CD8-positive, alpha-beta T cell (primary cell): ENCODE measurements at regions of chr11 and their contacts with region 1.

Region 1: GRCh38 chr11:19116971-19117750 is at the start of gene ZDHHC13:
- DNase-seq: peak; percentile 85 to 96 (median 93)
- ATAC-seq: peak; percentile 98
- H3K4me3 ChIP-seq: peak within 1 kb of the TSS; percentile 73 to 84
- H3K4me3 Mint-ChIP-seq: peak within 1 kb of the TSS; percentile 93
- H3K27ac ChIP-seq: peak within 1 kb of the TSS; percentile 48 to 62
- H3K27ac Mint-ChIP-seq: peak within 1 kb of the TSS; percentile 87
- H3K4me1 ChIP-seq: peaks cover 26% of the 10 kb centered on the region
- H3K4me1 Mint-ChIP-seq: peaks cover 50% of the 10 kb centered on the region
- H3K27me3 ChIP-seq: no peaks in the 10 kb centered on the region
- H3K27me3 Mint-ChIP-seq: no peaks in the 10 kb centered on the region
- CTCF ChIP-seq: no peak
- total RNA-seq, gene ZDHHC13: 3.1 to 3.5 TPM

Region 2: GRCh38 chr11:17389211-17389956 is 1727.8 kb before region 1 on chr11:
- CTCF ChIA-PET with region 1: no interaction called
- POLR2A ChIA-PET with region 1: no interaction called
- intact Hi-C with region 1: loop called in 1 of 2 experiments (anchors 5 kb)
- DNase-seq: peak; percentile 60 to 89 (median 83)
- ATAC-seq: peak; percentile 91
- H3K4me3 ChIP-seq: peak overlapping the region; percentile 69 to 75
- H3K4me3 Mint-ChIP-seq: peak overlapping the region; percentile 85
- H3K27ac ChIP-seq: no peak overlapping the region
- H3K27ac Mint-ChIP-seq: no peak overlapping the region
- H3K4me1 ChIP-seq: peaks cover 9% of the 10 kb centered on the region
- H3K4me1 Mint-ChIP-seq: peaks cover 8% of the 10 kb centered on the region
- H3K27me3 ChIP-seq: peaks cover 0 to 2% of the 10 kb centered on the region in 2 experiments
- H3K27me3 Mint-ChIP-seq: no peaks in the 10 kb centered on the region
- CTCF ChIP-seq: peak; percentile 71

Region 3: GRCh38 chr11:18000760-18001159 is 1116.4 kb before region 1 on chr11:
- CTCF ChIA-PET with region 1: no interaction called
- POLR2A ChIA-PET with region 1: no interaction called
- intact Hi-C with region 1: loop called in 1 of 2 experiments (anchors 10 kb)
- DNase-seq: no peak
- ATAC-seq: no peak
- H3K4me3 ChIP-seq: no peak overlapping the region
- H3K4me3 Mint-ChIP-seq: no peak overlapping the region
- H3K27ac ChIP-seq: no peak overlapping the region
- H3K27ac Mint-ChIP-seq: peak overlapping the region; percentile 6
- H3K4me1 ChIP-seq: no peaks in the 10 kb centered on the region
- H3K4me1 Mint-ChIP-seq: peaks cover 6% of the 10 kb centered on the region
- H3K27me3 ChIP-seq: no peaks in the 10 kb centered on the region
- H3K27me3 Mint-ChIP-seq: no peaks in the 10 kb centered on the region
- CTCF ChIP-seq: no peak

Region 4: GRCh38 chr11:19076744-19077589 is 40.2 kb before region 1 on chr11:
- CTCF ChIA-PET with region 1: interaction called, 4 read pairs
- POLR2A ChIA-PET with region 1: no interaction called
- intact Hi-C with region 1: loop called in 1 of 2 experiments (anchors 2 kb)
- DNase-seq: peak; percentile 20 to 68 (median 59)
- ATAC-seq: peak; percentile 61
- H3K4me3 ChIP-seq: no peak overlapping the region
- H3K4me3 Mint-ChIP-seq: no peak overlapping the region
- H3K27ac ChIP-seq: no peak overlapping the region
- H3K27ac Mint-ChIP-seq: no peak overlapping the region
- H3K4me1 ChIP-seq: no peaks in the 10 kb centered on the region
- H3K4me1 Mint-ChIP-seq: peaks cover 3% of the 10 kb centered on the region
- H3K27me3 ChIP-seq: no peaks in the 10 kb centered on the region
- H3K27me3 Mint-ChIP-seq: peaks cover 14% of the 10 kb centered on the region
- CTCF ChIP-seq: peak; percentile 99

Region 5: GRCh38 chr11:19240420-19241259 is 123.5 kb after region 1 on chr11 and contains the start of gene E2F8:
- CTCF ChIA-PET with region 1: no interaction called
- POLR2A ChIA-PET with region 1: no interaction called
- intact Hi-C with region 1: loop called (anchors 5 kb)
- DNase-seq: peak; percentile 57 to 86 (median 74)
- ATAC-seq: peak; percentile 77
- H3K4me3 ChIP-seq: peak within 1 kb of the TSS; percentile 67 to 76
- H3K4me3 Mint-ChIP-seq: peak within 1 kb of the TSS; percentile 85
- H3K27ac ChIP-seq: no peak within 1 kb of the TSS
- H3K27ac Mint-ChIP-seq: no peak within 1 kb of the TSS
- H3K4me1 ChIP-seq: peaks cover 20% of the 10 kb centered on the region
- H3K4me1 Mint-ChIP-seq: peaks cover 18% of the 10 kb centered on the region
- H3K27me3 ChIP-seq: peaks cover 21 to 29% of the 10 kb centered on the region in 2 experiments
- H3K27me3 Mint-ChIP-seq: peaks cover 35% of the 10 kb centered on the region
- CTCF ChIP-seq: no peak
- total RNA-seq, gene E2F8: 0.19 TPM in 1 of 2 experiments, not detected in the other

Region 6: DNA sequence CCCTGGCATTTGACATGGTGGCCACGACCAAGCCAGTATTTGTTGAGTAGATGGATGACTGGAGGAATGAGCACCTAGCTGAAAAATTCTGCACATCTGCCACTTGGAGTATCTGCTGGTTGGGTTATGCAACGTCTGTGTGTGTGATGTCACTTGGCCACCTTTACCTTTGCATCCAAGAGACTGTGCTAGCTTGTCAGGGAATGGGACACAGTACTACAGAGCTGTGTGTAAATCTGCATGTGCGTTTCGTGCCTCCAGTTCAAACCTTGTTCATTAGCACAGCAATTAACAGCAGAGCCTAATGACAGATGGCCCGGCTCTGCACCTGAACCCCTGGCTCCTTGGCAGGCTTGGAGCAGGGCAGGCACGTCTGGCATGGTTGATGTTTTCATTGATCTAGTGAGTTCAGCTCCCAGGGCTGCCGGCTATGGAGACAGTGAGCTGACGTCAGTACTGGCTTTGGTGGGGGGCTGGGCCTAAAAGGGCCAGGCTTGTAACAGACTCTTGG is 407.1 kb after region 1 on chr11:
- CTCF ChIA-PET with region 1: no interaction called
- POLR2A ChIA-PET with region 1: no interaction called
- intact Hi-C with region 1: no loop called
- DNase-seq: no peak
- ATAC-seq: no peak
- H3K4me3 ChIP-seq: no peak overlapping the region
- H3K4me3 Mint-ChIP-seq: no peak overlapping the region
- H3K27ac ChIP-seq: no peak overlapping the region
- H3K27ac Mint-ChIP-seq: no peak overlapping the region
- H3K4me1 ChIP-seq: no peaks in the 10 kb centered on the region
- H3K4me1 Mint-ChIP-seq: no peaks in the 10 kb centered on the region
- H3K27me3 ChIP-seq: no peaks in the 10 kb centered on the region
- H3K27me3 Mint-ChIP-seq: peaks cover 12% of the 10 kb centered on the region
- CTCF ChIP-seq: no peak

Region 7: DNA sequence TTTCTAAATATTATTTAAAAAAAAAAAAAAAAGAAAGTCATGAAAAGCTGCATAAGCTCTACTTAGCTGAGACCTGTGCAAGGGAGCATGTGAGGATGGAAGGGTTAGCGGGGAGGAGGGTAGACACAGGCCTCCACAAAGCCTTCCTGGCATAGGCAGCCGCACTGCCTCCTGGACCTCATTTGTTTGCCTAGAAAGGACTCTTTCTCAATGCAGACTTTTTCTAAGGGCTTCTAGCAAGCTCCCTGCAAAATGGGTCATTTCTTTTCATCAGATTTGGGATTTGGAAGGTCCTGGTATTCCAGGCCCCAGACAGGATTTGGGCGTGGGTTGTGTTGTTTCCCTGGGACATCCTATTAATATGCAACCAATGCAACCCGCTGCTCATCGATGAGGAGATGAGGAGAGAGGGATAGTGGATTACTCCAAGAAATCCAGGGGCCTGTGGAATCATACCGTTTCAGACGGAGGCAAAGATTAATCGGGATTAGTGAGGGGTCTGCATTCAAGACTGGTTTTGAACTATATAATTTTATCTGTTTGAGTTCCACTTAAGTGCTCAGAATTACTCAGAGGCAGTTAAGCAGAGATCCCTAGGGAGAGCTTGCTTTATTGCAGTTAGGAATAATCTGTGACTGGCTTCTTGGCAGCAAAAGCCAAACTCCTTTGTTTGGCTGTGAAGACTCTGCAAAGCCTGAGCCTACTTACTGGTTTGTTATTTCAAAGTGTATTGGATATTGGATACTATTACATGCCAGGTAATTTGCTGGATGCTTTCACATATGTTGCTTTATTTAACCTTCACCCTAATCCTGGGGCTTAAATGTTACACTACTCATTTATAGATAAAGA is 488.6 kb after region 1 on chr11:
- CTCF ChIA-PET with region 1: no interaction called
- POLR2A ChIA-PET with region 1: no interaction called
- intact Hi-C with region 1: no loop called
- DNase-seq: no peak
- ATAC-seq: no peak
- H3K4me3 ChIP-seq: no peak overlapping the region
- H3K4me3 Mint-ChIP-seq: no peak overlapping the region
- H3K27ac ChIP-seq: no peak overlapping the region
- H3K27ac Mint-ChIP-seq: no peak overlapping the region
- H3K4me1 ChIP-seq: no peaks in the 10 kb centered on the region
- H3K4me1 Mint-ChIP-seq: no peaks in the 10 kb centered on the region
- H3K27me3 ChIP-seq: peaks cover 0 to 2% of the 10 kb centered on the region in 2 experiments
- H3K27me3 Mint-ChIP-seq: peaks cover 38% of the 10 kb centered on the region
- CTCF ChIP-seq: no peak

Region 8: DNA sequence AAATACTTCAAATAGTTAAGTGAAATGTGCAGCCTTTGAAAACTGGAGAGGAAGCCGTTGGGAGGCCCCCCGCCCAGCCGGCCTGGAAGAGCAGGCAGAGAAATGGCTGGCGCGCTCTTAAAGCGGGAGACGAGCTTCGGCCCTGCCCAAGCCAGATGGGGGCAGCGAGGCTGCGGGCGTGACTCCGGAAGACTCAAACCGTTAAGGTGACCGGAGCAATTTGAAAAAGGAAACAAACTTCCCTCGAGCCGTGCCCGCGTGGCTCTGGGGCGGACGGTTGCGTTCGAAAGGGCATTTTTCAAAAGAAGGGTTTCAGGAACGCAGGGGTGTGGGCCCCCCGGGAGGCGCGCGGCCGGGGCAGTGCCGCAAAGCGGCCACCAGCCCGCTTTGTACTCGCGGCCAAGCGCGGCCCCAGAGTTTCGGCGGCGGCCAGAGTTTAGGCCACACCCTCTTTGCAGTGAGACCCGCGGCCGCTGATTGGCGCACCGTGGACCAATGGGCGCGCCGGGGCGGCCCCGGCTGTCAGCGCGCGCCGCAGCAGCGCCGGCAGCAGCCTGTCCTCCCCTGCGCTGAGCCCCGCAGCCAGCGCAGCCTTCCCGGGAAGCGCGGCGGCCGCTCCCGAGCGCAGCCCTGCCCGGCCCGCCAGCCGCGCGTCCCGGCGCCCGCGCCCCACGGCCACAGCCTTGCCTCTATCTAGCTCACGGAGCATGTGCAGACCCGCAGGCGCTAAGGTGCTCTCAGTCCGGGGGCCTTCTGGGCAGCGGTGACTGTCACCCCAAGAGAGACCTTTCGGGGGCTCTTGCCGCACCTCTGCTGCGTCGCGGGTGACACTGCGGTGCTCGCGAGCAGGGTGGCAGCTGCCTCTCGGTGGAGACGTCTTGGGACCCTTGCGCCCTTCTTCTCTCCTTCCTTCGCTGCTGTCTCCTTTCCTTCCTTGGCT is 595.4 kb after region 1 on chr11 and contains the start of gene NAV2:
- CTCF ChIA-PET with region 1: no interaction called
- POLR2A ChIA-PET with region 1: no interaction called
- intact Hi-C with region 1: loop called in 1 of 2 experiments (anchors 5 kb)
- DNase-seq: peak; percentile 43 to 88 (median 68)
- ATAC-seq: peak; percentile 97
- H3K4me3 ChIP-seq: peak within 1 kb of the TSS; percentile 67 to 86
- H3K4me3 Mint-ChIP-seq: peak within 1 kb of the TSS; percentile 90
- H3K27ac ChIP-seq: peak within 1 kb of the TSS; percentile 43 to 61
- H3K27ac Mint-ChIP-seq: peak within 1 kb of the TSS; percentile 90
- H3K4me1 ChIP-seq: peaks cover 20% of the 10 kb centered on the region
- H3K4me1 Mint-ChIP-seq: peaks cover 26% of the 10 kb centered on the region
- H3K27me3 ChIP-seq: peaks cover 15 to 19% of the 10 kb centered on the region in 2 experiments
- H3K27me3 Mint-ChIP-seq: peaks cover 33% of the 10 kb centered on the region
- CTCF ChIP-seq: no peak
- total RNA-seq, gene NAV2: 0.39 to 1.3 TPM